Esophagus muscularis mucosa (tissue), 4 donors: ENCODE measurements at regions of chr7 and their contacts with region 1.

Region 1: DNA sequence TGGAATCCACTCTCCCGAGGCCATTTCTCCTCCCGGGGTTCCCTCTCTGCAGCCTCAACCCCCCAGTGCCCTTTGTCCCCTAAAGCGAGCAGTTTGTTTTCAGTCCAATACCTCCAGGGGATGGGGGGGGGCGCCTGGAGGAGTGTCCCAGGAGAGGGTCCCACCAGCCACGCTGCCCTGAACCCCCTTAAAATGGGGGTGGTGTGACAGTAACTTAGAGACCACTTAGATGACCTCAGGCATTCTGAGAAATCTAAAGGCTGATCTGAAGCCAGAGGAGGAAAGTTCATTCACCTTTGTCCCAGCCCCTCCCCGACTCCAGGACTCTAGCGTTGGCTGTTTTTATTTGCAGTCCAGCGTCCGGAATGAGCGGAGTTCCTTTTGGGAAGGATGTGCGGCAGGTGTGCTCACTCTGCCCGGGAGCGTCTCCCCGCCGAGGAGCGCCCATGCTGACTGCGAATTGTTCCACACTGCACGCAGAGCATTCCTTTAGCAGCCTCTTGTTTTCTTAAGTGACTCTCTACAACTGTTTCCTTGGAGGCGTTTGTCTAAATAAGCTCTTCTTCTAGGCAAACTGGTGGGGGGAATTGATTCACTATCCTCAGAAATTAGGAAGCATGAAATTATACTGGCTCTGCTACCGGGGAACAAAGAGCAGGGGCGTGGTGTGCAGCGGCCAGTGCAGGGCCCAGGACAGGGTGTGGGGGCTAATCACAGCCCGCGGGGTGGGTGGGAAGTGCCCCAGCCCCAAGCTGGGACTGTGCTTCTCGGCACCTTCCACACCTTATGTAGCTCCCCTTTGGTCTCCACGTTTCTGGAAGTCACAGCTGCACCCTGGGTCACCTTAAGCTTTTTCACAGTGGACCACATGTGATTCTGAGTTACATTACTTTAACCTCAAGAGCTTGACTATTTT is 46.3 kb downstream of the SYPL1 start:
- DNase-seq: peak; percentile 55
- H3K4me3 ChIP-seq: peak overlapping the region; percentile 27 to 51 (median 40)
- H3K27ac ChIP-seq: peak overlapping the region; percentile 82 to 89 (median 86)
- H3K4me1 ChIP-seq: peaks cover 46 to 71% (median 67%) of the 10 kb centered on the region in 4 donors
- H3K27me3 ChIP-seq: no peaks in the 10 kb centered on the region
- CTCF ChIP-seq: no peak
- EP300 ChIP-seq: no peak
- POLR2A ChIP-seq: peak; percentile 1

Region 2: DNA sequence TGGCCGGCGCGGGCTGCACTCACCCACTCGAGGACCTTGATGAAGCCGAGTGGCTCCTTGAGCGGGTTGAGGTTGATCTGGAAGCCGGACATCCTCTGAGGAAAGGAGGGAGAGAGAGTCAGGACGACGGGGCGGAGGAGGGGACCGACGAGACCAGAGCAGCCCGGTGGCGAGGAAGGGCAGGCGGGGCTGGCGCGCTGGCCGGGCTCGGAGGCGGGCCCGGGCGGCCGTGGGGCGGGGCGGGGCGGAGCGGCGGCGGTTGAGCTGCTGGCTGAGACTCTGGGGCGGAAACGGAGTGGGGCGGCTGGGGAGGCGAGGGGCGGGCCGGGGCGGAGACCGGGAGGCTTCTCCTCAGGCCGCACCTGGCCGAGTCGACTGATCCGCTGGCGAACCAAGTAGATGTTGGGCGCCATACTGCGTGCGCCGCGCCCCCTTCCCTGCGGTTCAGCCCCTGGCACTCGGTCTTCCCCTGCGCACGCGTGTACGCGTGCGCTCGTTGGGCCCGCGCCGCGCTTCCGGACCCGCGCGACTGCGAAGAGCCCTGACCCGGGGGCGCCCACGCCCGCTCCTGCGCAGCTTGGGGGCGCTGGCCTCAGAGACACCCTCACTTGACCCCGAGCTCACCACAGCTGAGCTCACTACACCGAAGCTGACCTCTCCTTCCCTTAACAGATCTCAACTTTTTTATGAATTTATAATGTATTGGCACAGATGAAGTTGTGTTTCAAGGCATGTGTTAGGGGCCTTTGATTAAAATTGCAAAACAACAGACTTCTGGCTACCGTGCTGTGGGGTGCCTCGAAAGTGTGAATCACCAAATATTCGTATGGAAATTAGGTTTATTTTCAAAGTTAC is 46.5 kb after region 1 on chr7 and contains the start of gene SYPL1:
- intact Hi-C with region 1: loop called (anchors 2 kb)
- DNase-seq: peak; percentile 98
- H3K4me3 ChIP-seq: peak within 1 kb of the TSS; percentile 76 to 85 (median 81)
- H3K27ac ChIP-seq: peak within 1 kb of the TSS; percentile 98 to 99 (median 98)
- H3K4me1 ChIP-seq: peaks cover 34 to 73% (median 71%) of the 10 kb centered on the region in 4 donors
- H3K27me3 ChIP-seq: no peaks in the 10 kb centered on the region
- CTCF ChIP-seq: peak in 1 of 3 experiments; percentile 13
- EP300 ChIP-seq: no peak
- POLR2A ChIP-seq: peak; percentile 24
- total RNA-seq, gene SYPL1: 83.6 to 135 (median 90.8) TPM

Region 3: DNA sequence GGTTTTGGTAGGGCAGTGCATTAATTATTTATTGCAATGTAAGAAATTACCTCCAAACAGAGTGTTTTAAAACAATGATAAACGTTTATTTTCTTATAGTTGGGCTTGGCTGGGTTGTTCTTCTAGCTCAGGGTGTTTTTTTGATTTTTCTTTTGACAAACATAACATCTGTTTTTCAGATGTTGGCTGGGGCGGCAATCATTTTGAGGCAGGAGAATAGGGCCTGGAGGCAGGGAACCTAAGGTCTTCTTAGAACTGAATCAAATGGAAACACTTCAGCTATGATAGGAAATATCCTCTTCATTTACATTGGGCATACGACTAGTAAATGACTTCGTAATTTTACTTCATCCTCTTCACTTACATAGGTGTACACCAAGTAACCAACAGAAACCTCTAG is 266.4 kb after region 1 on chr7:
- intact Hi-C with region 1: no loop called
- DNase-seq: no peak
- H3K4me3 ChIP-seq: no peak overlapping the region
- H3K27ac ChIP-seq: no peak overlapping the region
- H3K4me1 ChIP-seq: peaks cover 0 to 10% (median 0%) of the 10 kb centered on the region in 4 donors
- H3K27me3 ChIP-seq: no peaks in the 10 kb centered on the region
- CTCF ChIP-seq: no peak
- EP300 ChIP-seq: no peak
- POLR2A ChIP-seq: no peak